Activated CD4-positive, alpha-beta T cell treated with anti-CD3 and anti-CD28 coated beads, Interleukin-2, amount 10 ng/mL, durations not matched to agents 24 days and 14 days (primary cell): ENCODE measurements at regions of chr10 and their contacts with region 1.

Region 1: GRCh38 chr10:62992145-62992721 is 140.9 kb upstream of the NRBF2 start:
- DNase-seq: no peak
- H3K4me3 Mint-ChIP-seq: peak overlapping the region; percentile 62
- H3K27ac Mint-ChIP-seq: peak overlapping the region; percentile 91
- H3K4me1 Mint-ChIP-seq: peaks cover 54% of the 10 kb centered on the region
- H3K27me3 Mint-ChIP-seq: no peaks in the 10 kb centered on the region

Region 2: DNA sequence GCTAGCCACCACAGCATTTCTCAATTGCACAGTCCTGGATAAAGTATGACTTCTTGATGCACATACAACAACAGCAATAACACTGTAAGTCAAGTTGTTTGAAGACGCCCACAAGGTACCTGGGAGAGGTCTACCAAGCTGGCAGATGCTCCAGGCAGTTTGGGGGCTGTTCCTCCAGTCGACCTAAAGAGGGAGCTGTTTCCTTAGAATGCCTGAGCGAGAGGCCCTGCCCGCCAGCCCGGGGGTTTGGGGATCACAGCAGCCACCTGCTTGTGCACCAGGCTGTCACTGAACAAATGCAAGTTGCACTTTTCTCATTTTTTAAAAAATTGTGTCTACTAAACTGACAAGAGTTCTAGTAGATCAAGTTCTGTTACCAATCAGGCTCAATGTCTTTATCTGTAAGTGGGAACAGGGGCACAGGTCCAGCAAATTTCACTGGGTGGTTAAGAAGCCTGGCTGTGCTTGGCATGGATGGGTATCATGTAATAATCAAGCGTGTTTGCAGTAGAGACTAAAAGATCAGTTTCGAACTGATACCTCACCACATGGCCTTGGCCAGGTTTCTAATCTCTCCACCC is 381.5 kb before region 1 on chr10:
- intact Hi-C with region 1: loop called (anchors 5 kb)
- DNase-seq: peak; percentile 93
- H3K4me3 Mint-ChIP-seq: no peak overlapping the region
- H3K27ac Mint-ChIP-seq: peak overlapping the region; percentile 27
- H3K4me1 Mint-ChIP-seq: peaks cover 46% of the 10 kb centered on the region
- H3K27me3 Mint-ChIP-seq: peaks cover 5% of the 10 kb centered on the region

Region 3: DNA sequence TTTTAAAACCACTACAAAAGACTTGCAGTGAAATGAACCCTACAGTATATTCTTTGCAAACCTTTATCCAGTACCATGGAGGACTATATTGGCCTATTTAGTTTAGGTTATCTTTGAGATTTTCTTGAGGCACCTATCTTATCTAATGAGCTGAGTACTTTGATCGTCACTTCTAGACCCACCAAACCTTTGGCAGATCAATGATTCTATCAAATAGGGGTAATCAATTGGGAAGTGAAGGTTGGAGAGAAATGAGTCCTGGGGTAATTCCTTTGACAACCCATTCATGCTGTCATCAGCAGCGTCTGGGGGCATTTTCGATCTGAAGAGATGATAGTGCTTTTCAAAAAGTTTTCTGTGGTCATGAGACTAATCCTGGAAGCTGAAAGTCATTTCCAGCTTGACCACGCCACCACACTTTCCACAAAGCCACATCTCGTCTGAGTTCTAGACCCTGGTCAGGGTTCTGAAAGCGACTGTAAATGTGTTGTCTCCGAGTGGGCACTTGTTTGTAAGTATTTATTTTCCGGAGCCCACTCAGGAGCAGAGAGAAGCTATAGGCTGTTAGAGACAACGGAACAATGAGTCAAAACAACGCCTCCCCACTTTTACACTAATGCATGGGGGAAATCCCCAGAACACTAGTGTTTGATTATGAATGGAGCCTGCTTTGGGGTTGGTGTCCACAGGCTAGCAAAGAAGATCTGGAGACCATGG is 180.9 kb before region 1 on chr10:
- intact Hi-C with region 1: loop called (anchors 1 kb)
- DNase-seq: peak; percentile 90
- H3K4me3 Mint-ChIP-seq: peak overlapping the region; percentile 97
- H3K27ac Mint-ChIP-seq: peak overlapping the region; percentile 100
- H3K4me1 Mint-ChIP-seq: peaks cover 67% of the 10 kb centered on the region
- H3K27me3 Mint-ChIP-seq: peaks cover 1% of the 10 kb centered on the region

Region 4: GRCh38 chr10:62858364-62858763 is 133.9 kb before region 1 on chr10:
- intact Hi-C with region 1: loop called (anchors 1 kb)
- DNase-seq: no peak
- H3K4me3 Mint-ChIP-seq: no peak overlapping the region
- H3K27ac Mint-ChIP-seq: no peak overlapping the region
- H3K4me1 Mint-ChIP-seq: peaks cover 60% of the 10 kb centered on the region
- H3K27me3 Mint-ChIP-seq: peaks cover 4% of the 10 kb centered on the region

Region 5: GRCh38 chr10:63068246-63068645 is 76.0 kb after region 1 on chr10:
- intact Hi-C with region 1: loop called (anchors 1 kb)
- DNase-seq: peak; percentile 70
- H3K4me3 Mint-ChIP-seq: peak overlapping the region; percentile 49
- H3K27ac Mint-ChIP-seq: peak overlapping the region; percentile 34
- H3K4me1 Mint-ChIP-seq: peaks cover 38% of the 10 kb centered on the region
- H3K27me3 Mint-ChIP-seq: peaks cover 15% of the 10 kb centered on the region